Right ventricle myocardium inferior (tissue), 1 donor: ENCODE measurements at regions of chr3 and their contacts with region 1.

Region 1: GRCh38 chr3:98039322-98040024 is 4.4 kb upstream of the GABRR3 start:
- DNase-seq: no peak
- ATAC-seq: peak; percentile 89

Region 2: GRCh38 chr3:98095870-98096269 is 56.4 kb after region 1 on chr3:
- intact Hi-C with region 1: no loop called
- DNase-seq: no peak
- ATAC-seq: no peak

Region 3: GRCh38 chr3:98329392-98330124 is 290.1 kb after region 1 on chr3:
- intact Hi-C with region 1: loop called (anchors 2 kb)
- DNase-seq: no peak
- ATAC-seq: no peak